Activated CD8-positive, alpha-beta T cell treated with anti-CD3 and anti-CD28 coated beads for 36 hours (primary cell): ENCODE measurements at regions of chr14 and their contacts with region 1.

Region 1: DNA sequence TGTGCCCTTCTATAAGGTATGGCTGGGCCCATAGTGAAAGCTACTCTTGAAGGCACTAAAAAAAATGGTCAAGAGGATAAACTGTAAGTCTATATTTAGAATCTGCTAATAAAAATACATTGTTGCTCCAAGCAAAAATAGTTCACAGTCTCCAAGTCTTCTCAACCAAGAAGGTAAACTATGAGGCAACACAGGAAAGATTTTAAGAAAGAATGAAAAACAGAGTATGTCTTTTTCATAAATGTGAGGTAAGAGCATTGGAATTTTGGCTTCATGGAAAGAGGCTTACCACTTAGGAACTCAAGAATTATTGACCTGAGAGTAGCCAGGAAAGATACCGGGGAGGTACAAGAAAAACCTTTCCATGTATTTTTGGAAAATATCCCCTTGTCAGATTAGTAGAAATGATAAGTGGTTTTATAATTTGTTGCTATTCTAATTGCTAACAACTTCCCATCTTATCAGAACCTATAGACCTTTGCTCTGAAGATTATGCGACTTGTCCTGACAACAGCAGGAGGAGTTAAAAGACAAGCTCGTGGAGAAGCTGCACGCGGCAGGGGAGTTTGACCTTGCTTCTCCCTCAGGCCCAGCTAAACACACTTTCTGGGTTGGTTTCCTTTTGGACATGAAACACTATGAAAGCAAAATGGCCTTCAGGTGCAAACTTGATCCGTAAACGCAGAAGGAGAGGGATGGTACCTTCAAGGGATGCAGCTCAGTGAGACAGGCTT is 238.1 kb downstream of the FOXN3 start:
- DNase-seq: no peak
- ATAC-seq: no peak
- H3K4me3 Mint-ChIP-seq: no peak overlapping the region
- H3K27ac Mint-ChIP-seq: peak overlapping the region; percentile 17
- H3K4me1 Mint-ChIP-seq: peaks cover 8% of the 10 kb centered on the region
- H3K27me3 Mint-ChIP-seq: no peaks in the 10 kb centered on the region
- CTCF ChIP-seq: no peak

Region 2: DNA sequence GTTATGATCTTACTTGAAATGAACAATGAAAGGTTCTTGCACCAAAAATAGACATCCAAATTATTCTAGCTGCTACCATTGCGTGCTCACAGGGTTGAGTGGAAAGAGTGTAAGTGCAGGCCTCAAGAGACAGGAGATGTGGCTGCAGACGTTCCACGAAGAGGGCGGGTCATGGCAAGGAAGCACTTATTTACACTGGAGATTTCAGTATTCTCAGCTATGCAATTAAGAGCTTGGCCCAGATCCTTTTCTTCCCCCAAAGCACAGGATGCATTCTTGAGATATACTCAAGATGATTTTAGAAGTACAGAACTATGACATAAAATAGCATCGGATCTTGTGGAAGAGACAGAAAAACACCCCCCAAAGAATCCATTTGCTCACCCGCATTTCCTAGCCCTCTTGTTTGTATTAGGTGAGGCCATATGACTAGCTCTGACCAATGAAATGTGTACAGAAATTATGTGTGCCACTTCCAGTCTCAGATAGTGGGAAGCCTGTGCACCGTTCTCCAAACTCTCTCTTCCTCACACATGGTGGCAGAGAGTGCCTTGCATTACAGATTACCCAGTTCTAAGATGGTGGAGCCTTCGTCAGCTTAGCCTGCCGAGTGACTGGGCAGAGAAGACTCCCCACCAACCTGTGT is 93.1 kb before region 1 on chr14:
- CTCF ChIA-PET with region 1: no interaction called
- POLR2A ChIA-PET with region 1: no interaction called
- intact Hi-C with region 1: no loop called
- DNase-seq: no peak
- ATAC-seq: no peak
- H3K4me3 Mint-ChIP-seq: no peak overlapping the region
- H3K27ac Mint-ChIP-seq: no peak overlapping the region
- H3K4me1 Mint-ChIP-seq: no peaks in the 10 kb centered on the region
- H3K27me3 Mint-ChIP-seq: no peaks in the 10 kb centered on the region
- CTCF ChIP-seq: no peak

Region 3: GRCh38 chr14:89767861-89768268 is 588.9 kb after region 1 on chr14:
- CTCF ChIA-PET with region 1: interaction called, 4 read pairs
- POLR2A ChIA-PET with region 1: no interaction called
- intact Hi-C with region 1: loop called (anchors 10 kb)
- DNase-seq: peak; percentile 79
- ATAC-seq: peak; percentile 90
- H3K4me3 Mint-ChIP-seq: peak overlapping the region; percentile 50
- H3K27ac Mint-ChIP-seq: peak overlapping the region; percentile 89
- H3K4me1 Mint-ChIP-seq: peaks cover 30% of the 10 kb centered on the region
- H3K27me3 Mint-ChIP-seq: no peaks in the 10 kb centered on the region
- CTCF ChIP-seq: peak; percentile 82